A549 (cell line): ENCODE measurements at regions of chr20 and their contacts with region 1.

Region 1: GRCh38 chr20:21505161-21505809 is 8.6 kb downstream of the NKX2-2 start:
- DNase-seq: peak; percentile 70 to 83
- ATAC-seq: peak; percentile 41 to 77
- H3K4me3 ChIP-seq: peak overlapping the region; percentile 55
- H3K27ac ChIP-seq: peak overlapping the region; percentile 40 to 77; a peak in 5 of 6 replicates
- H3K4me1 ChIP-seq: peaks cover 6% of the 10 kb centered on the region; the same call in 1 of the 3 replicates
- CTCF ChIP-seq: peak; percentile 95
- EP300 ChIP-seq: no peak
- POLR2A ChIP-seq: no peak
- RAD21 ChIP-seq: peak; percentile 97 to 99

Region 2: DNA sequence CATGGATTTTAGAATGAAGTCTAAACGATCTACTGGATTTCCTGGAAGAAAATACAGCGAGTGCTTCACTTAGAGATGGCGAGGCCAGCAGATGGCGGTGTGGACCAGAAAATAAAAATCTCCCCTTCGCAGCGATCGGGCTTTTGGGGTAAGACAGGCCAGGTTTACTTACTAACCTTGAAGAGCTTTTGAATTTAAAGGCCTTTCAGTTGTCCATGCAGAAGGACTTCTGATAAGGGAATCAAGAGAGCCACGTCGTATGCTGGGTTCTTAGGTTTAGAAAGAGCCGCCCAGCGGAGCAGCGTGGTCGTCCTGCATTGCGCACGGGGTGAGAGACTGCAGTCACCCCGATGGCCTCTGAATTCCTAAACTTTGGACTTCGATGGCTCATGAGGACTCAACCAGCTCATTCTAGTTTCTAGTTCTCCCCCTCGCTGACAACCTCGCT is 667.7 kb before region 1 on chr20:
- CTCF ChIA-PET with region 1: interaction called, 199 read pairs
- POLR2A ChIA-PET with region 1: no interaction called
- DNase-seq: peak; percentile 59 to 65
- ATAC-seq: peak; percentile 80 to 89; a peak in 5 of 6 replicates
- H3K4me3 ChIP-seq: no peak overlapping the region
- H3K27ac ChIP-seq: no peak overlapping the region
- H3K4me1 ChIP-seq: no peaks in the 10 kb centered on the region
- CTCF ChIP-seq: peak; percentile 85
- EP300 ChIP-seq: no peak
- POLR2A ChIP-seq: no peak
- RAD21 ChIP-seq: peak; percentile 85 to 89

Region 3: DNA sequence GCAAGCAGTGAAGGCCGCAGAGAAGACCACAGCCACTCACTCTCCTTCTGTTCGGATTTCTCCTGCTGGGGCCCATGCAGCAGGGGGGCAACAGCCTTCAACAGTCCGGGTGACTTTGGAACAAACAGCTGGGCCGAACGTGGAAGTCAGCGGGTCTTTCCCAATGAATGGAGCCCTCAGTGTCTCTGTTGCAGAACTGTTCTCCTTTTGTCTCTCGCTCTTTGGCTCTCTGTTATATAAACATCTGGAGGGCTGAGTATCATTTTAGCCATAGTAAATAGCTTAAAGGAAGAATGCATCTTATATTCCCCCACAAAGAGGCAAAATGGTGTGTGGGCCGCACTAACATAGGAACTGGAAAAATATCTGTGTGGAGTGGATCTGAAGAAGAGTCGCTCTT is 656.1 kb before region 1 on chr20:
- CTCF ChIA-PET with region 1: interaction called, 25 read pairs
- POLR2A ChIA-PET with region 1: no interaction called
- DNase-seq: no peak
- ATAC-seq: no peak
- H3K4me3 ChIP-seq: no peak overlapping the region
- H3K27ac ChIP-seq: no peak overlapping the region
- H3K4me1 ChIP-seq: no peaks in the 10 kb centered on the region
- CTCF ChIP-seq: no peak
- EP300 ChIP-seq: no peak
- POLR2A ChIP-seq: no peak
- RAD21 ChIP-seq: no peak

Region 4: GRCh38 chr20:21048841-21049273 is 456.4 kb before region 1 on chr20:
- CTCF ChIA-PET with region 1: interaction called, 11 read pairs
- POLR2A ChIA-PET with region 1: no interaction called
- DNase-seq: peak; percentile 50 to 69
- ATAC-seq: peak; percentile 67 to 97; a peak in 4 of 6 replicates
- H3K4me3 ChIP-seq: no peak overlapping the region
- H3K27ac ChIP-seq: no peak overlapping the region
- H3K4me1 ChIP-seq: no peaks in the 10 kb centered on the region
- CTCF ChIP-seq: peak; percentile 55
- EP300 ChIP-seq: no peak
- POLR2A ChIP-seq: no peak
- RAD21 ChIP-seq: peak; percentile 41 to 55; a peak in 3 of 5 replicates

Region 5: GRCh38 chr20:21391185-21391971 is 113.9 kb before region 1 on chr20:
- CTCF ChIA-PET with region 1: interaction called, 10 read pairs
- POLR2A ChIA-PET with region 1: no interaction called
- DNase-seq: no peak
- ATAC-seq: peak; percentile 22 to 37; a peak in 1 of 6 replicates
- H3K4me3 ChIP-seq: no peak overlapping the region
- H3K27ac ChIP-seq: no peak overlapping the region
- H3K4me1 ChIP-seq: no peaks in the 10 kb centered on the region
- CTCF ChIP-seq: no peak
- EP300 ChIP-seq: no peak
- POLR2A ChIP-seq: no peak
- RAD21 ChIP-seq: no peak

Region 6: GRCh38 chr20:21520702-21521595 is 15.7 kb after region 1 on chr20:
- CTCF ChIA-PET with region 1: interaction called, 86 read pairs
- POLR2A ChIA-PET with region 1: no interaction called
- DNase-seq: no peak
- ATAC-seq: peak in 1 of 2 experiments; percentile 24; a peak in 2 of 6 replicates
- H3K4me3 ChIP-seq: no peak overlapping the region
- H3K27ac ChIP-seq: no peak overlapping the region
- H3K4me1 ChIP-seq: peaks cover 5% of the 10 kb centered on the region; the same call in 1 of the 3 replicates
- CTCF ChIP-seq: no peak
- EP300 ChIP-seq: no peak
- POLR2A ChIP-seq: no peak
- RAD21 ChIP-seq: peak in 1 of 2 experiments; percentile 17; a peak in 1 of 5 replicates

Region 7: DNA sequence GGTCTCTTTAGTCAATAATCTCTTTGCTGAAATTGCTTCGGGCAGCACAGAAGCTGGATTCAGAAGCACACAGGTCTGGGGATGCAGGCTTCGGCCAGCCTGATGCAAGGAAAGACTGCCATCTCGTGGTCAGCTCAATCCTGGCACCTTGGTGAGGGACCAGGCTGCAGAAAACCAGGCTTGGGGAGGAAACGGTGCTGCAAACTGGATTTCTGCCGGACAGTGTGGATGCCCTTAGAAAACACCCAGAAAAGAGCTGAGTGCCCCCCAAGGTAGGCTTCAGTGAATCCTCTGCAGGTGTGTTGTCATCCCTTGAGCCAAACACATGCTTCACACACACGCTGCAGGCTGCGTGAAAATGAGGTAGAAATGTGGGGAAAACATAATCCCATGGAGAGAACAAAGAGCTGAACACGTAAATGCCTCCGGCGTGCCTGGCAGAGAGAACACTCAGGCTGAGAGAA is 110.4 kb after region 1 on chr20:
- CTCF ChIA-PET with region 1: interaction called, 13 read pairs
- POLR2A ChIA-PET with region 1: no interaction called
- DNase-seq: peak; percentile 71 to 73
- ATAC-seq: peak; percentile 88 to 98
- H3K4me3 ChIP-seq: no peak overlapping the region
- H3K27ac ChIP-seq: no peak overlapping the region
- H3K4me1 ChIP-seq: no peaks in the 10 kb centered on the region
- CTCF ChIP-seq: peak; percentile 84
- EP300 ChIP-seq: no peak
- POLR2A ChIP-seq: no peak
- RAD21 ChIP-seq: peak; percentile 77 to 87

Region 8: GRCh38 chr20:21741266-21741665 is 236.0 kb after region 1 on chr20:
- CTCF ChIA-PET with region 1: no interaction called
- POLR2A ChIA-PET with region 1: no interaction called
- DNase-seq: no peak
- ATAC-seq: no peak
- H3K4me3 ChIP-seq: no peak overlapping the region
- H3K27ac ChIP-seq: no peak overlapping the region
- H3K4me1 ChIP-seq: no peaks in the 10 kb centered on the region
- CTCF ChIP-seq: no peak
- EP300 ChIP-seq: no peak
- POLR2A ChIP-seq: no peak
- RAD21 ChIP-seq: no peak

Region 9: DNA sequence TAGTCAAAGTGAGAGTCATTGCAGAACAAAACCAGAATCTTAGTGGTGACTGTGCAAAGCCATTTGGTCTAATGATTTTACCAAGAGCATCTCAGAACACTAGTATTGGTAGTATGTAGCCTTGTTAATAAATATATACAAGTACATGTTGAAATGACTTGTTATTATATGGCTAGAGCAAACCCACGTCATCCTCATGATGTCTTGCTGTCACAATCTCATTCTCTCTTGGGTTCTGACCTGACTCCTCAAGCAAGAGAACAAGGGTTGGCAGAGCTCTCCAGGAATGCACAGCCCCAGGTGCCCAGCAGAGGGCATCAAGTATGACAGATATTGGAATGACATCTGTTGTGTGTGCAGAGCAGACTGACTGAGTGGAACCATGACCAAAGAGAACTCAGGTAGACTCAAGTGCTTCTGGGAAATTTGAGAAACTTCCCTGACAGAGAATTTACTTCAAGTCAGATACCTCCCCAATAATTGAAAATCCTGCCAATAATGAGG is 290.7 kb after region 1 on chr20:
- CTCF ChIA-PET with region 1: no interaction called
- POLR2A ChIA-PET with region 1: no interaction called
- DNase-seq: peak in 1 of 2 experiments; percentile 13
- ATAC-seq: peak in 1 of 2 experiments; percentile 57; a peak in 1 of 6 replicates
- H3K4me3 ChIP-seq: no peak overlapping the region
- H3K27ac ChIP-seq: no peak overlapping the region
- H3K4me1 ChIP-seq: no peaks in the 10 kb centered on the region
- CTCF ChIP-seq: no peak; the same call in 2 of the 3 replicates
- EP300 ChIP-seq: no peak
- POLR2A ChIP-seq: no peak
- RAD21 ChIP-seq: no peak; a peak in 1 of 5 replicates